OCI-LY7 (cell line): ENCODE measurements at regions of chr4 and their contacts with region 1.

Region 1: DNA sequence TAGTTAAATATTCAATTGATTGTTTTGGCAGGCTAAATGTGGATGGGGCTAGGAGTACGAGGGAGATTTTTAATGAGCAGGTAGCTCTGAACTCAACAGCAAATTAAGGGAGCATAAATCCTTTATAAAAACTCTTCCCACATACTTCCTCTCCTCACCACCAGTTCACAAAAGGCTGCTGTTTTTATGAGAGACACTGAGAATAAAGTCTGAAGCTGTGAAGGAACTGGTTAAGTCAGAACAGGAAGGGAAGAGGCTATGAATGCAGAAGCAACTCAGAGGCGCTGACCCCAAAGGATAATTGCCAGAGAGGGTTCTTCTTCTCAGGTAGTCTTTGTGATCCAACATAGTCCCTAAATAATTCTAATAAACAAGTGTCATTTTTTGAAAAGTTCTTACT is 406.1 kb downstream of the GPM6A start:
- DNase-seq: peak; percentile 54
- H3K4me3 ChIP-seq: peak overlapping the region; percentile 14
- H3K27ac ChIP-seq: peak overlapping the region; percentile 39
- H3K4me1 ChIP-seq: peaks cover 9% of the 10 kb centered on the region
- CTCF ChIP-seq: no peak

Region 2: DNA sequence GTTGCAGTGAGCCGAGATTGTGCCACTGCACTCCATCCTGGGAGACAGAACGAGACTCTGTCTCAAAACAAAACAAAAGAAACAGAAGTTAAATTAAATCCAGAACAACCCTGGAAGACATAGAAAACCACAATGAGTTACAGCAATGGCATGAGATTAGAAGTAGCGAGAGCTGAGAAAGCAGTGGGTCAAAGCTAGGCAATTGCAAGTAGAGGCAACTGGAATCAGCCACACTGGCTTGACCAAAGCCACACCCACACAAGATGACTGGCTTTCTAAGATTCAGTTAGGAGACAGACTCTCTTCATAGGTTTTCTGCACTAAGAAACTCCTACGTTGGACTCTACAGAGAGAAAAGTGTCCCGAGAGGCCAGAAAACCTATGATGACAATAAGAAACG is 36.9 kb before region 1 on chr4:
- CTCF ChIA-PET with region 1: no interaction called
- POLR2A ChIA-PET with region 1: no interaction called
- intact Hi-C with region 1: loop called (anchors 5 kb)
- DNase-seq: no peak
- H3K4me3 ChIP-seq: no peak overlapping the region
- H3K27ac ChIP-seq: no peak overlapping the region
- H3K4me1 ChIP-seq: no peaks in the 10 kb centered on the region
- CTCF ChIP-seq: no peak

Region 3: GRCh38 chr4:175971388-175972179 is 565.6 kb after region 1 on chr4:
- CTCF ChIA-PET with region 1: no interaction called
- POLR2A ChIA-PET with region 1: no interaction called
- intact Hi-C with region 1: no loop called
- DNase-seq: no peak
- H3K4me3 ChIP-seq: no peak overlapping the region
- H3K27ac ChIP-seq: no peak overlapping the region
- H3K4me1 ChIP-seq: no peaks in the 10 kb centered on the region
- CTCF ChIP-seq: no peak